ENCODE measurements at regions of chr5 and their contacts with region 1.

Region 1: GRCh38 chr5:75351139-75351926 is 14.3 kb downstream of the HMGCR start:
- DNase-seq: no peak
- H3K4me3 Mint-ChIP-seq: no peak overlapping the region
- H3K27ac Mint-ChIP-seq: no peak overlapping the region
- H3K4me1 Mint-ChIP-seq: no peaks in the 10 kb centered on the region
- H3K27me3 Mint-ChIP-seq: no peaks in the 10 kb centered on the region
- CTCF ChIP-seq: no peak

Region 2: GRCh38 chr5:75363726-75364495 is 12.6 kb after region 1 on chr5:
- CTCF ChIA-PET with region 1: interaction called, 3 read pairs
- POLR2A ChIA-PET with region 1: interaction called, 15 read pairs
- intact Hi-C with region 1: no loop called
- DNase-seq: peak; percentile 18
- H3K4me3 Mint-ChIP-seq: no peak overlapping the region
- H3K27ac Mint-ChIP-seq: no peak overlapping the region
- H3K4me1 Mint-ChIP-seq: no peaks in the 10 kb centered on the region
- H3K27me3 Mint-ChIP-seq: no peaks in the 10 kb centered on the region
- CTCF ChIP-seq: no peak